ENCODE measurements at regions of chr14 and their contacts with region 1.

Region 1: GRCh38 chr14:97442363-97442762 is 645.2 kb downstream of the VRK1 start:
- DNase-seq: peak; percentile 57
- ATAC-seq: peak; percentile 76
- H3K4me3 Mint-ChIP-seq: no peak overlapping the region
- H3K27ac Mint-ChIP-seq: peak overlapping the region; percentile 88
- H3K4me1 Mint-ChIP-seq: peaks cover 30% of the 10 kb centered on the region
- H3K27me3 Mint-ChIP-seq: no peaks in the 10 kb centered on the region
- CTCF ChIP-seq: no peak

Region 2: GRCh38 chr14:97458661-97459579 is 16.6 kb after region 1 on chr14:
- CTCF ChIA-PET with region 1: interaction called, 22 read pairs
- POLR2A ChIA-PET with region 1: interaction called, 16 read pairs
- intact Hi-C with region 1: no loop called
- DNase-seq: peak; percentile 90
- ATAC-seq: peak; percentile 77
- H3K4me3 Mint-ChIP-seq: peak overlapping the region; percentile 92
- H3K27ac Mint-ChIP-seq: peak overlapping the region; percentile 100
- H3K4me1 Mint-ChIP-seq: peaks cover 49% of the 10 kb centered on the region
- H3K27me3 Mint-ChIP-seq: no peaks in the 10 kb centered on the region
- CTCF ChIP-seq: no peak